AG04450 (cell line): ENCODE measurements at regions of chr14 and their contacts with region 1.

Region 1: DNA sequence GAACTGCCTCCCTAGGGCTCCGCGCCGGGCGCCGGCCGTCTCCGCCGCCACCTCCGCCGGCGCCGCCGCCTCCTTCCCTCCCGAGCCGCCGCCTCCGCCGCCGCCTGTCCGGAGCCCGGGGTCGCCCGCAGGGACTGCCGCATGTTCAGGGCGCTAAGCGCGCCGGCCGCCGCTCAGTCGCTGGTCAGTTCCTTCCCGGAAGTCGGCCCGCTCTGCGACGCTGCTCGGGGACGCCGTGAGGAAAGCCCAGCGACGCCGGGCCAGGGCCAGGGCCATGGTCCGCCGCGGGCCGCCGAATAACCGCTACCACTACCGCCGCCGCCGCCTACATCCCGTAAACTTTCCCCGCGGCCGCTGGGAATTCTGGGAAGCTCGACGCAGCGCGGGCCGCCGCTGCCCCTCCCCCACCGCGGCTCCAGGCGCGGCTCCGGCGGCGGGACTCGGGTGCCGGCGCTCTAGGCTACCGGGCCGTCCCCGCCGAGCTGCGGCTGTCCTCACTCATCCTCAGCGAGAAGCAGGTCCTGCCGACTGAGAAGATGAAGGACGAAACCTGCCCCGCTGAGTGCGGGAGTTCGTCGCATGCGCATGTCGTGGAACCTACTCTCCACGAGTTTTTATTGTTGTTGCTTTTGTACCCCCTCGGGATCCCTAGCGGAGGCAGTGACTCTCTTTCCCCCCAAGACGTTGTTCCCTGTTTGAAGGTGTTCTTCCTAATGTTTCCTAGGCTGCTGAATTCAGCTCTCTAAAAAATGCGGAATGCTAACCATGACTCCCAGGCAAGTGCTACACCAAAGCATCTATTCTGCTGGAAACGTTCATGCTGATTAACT is at the start of gene SAV1:
- DNase-seq: peak; percentile 75
- H3K4me3 ChIP-seq: peak within 1 kb of the TSS; percentile 79
- H3K27ac ChIP-seq: peak within 1 kb of the TSS; percentile 73
- H3K27me3 ChIP-seq: no peaks in the 10 kb centered on the region
- CTCF ChIP-seq: no peak
- polyA plus RNA-seq, gene SAV1: 27.6 and 33.8 TPM in 2 replicates

Region 2: DNA sequence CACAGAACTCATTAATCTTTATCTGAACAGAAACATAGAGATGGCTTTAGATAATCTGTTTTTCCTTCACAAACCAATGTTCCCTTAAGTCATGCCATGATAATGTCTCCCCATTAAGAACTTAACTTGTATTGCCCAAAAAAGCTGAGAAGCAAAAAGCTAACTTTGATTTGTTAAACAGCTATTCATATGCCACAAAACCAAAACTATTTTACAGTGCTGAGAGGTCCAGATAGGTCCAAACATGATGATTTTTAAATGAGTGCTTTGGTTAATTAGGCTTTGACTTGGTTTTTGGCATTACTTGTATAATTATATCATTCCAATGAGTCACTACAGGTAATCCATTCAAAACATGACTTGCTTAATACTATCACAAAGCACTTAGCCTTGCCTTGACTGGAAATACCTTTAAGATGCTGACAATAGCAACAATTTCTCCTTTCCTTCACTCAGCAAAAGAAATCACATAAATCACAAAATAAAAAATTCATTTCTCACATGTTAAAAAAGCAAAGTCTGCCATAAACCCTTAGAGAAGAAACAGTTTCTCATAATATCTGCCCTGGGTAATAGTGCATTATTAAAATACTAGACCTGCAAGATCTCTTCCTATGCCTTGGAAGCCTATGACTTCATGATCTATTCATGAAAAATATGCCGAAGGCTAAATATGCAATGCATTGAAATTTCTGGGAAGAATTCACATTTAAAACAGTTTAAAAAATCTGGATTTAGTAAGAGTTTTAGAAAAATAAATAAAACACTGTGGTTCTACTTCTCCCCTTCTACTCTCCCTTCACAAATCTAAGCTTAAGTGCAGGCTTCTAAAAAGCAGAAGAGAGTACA is 51.9 kb after region 1 on chr14:
- CTCF ChIA-PET with region 1: interaction called, 3 read pairs
- POLR2A ChIA-PET with region 1: interaction called, 11 read pairs
- DNase-seq: peak; percentile 24
- H3K4me3 ChIP-seq: no peak overlapping the region
- H3K27ac ChIP-seq: no peak overlapping the region
- H3K27me3 ChIP-seq: no peaks in the 10 kb centered on the region
- CTCF ChIP-seq: no peak

Region 3: DNA sequence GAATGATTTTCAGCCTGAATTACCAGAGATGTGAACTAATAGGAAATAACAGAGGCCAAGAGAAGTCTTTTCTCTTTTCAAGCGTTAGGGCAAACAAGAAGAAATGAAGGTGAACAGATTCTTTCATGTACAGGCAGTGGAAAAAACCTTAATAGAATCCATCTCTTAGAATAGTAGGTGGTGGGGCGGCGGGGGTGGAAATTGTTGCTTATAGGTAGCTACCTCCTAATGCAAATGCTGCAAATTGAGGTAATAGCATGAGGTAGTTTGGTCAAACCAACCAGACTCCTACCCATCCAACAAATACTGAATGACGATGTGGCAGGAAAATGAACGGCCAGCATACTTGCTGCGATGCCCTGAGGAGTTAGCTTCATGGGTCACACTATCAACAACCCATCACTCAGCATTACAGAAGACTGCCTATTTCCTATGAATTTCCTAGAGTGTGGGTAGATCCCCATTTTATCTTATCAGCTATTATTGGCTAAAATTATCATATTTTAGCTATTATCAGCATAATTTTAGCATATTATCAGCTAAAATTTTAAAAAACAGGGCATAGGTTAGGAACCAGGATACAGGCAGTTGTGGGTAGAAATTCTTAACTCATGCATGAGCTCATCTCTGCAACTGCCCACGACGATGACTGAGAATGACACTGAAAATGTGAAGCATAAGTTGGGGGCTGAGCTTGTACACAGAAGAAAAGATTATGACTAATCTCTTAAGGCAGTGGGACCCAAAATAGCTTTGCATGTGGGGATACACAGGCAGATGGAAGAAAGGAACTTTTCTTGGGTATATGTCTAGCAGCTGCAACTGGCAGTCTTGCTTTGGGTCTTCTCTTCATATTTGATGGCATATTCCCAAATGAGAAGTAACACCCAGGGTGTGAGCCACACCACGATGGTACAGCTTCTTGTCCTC is 94.1 kb after region 1 on chr14:
- CTCF ChIA-PET with region 1: no interaction called
- POLR2A ChIA-PET with region 1: interaction called, 10 read pairs
- DNase-seq: peak; percentile 38
- H3K4me3 ChIP-seq: no peak overlapping the region
- H3K27ac ChIP-seq: no peak overlapping the region
- H3K27me3 ChIP-seq: no peaks in the 10 kb centered on the region
- CTCF ChIP-seq: no peak